PC-9 (cell line): ENCODE measurements at regions of chr19 and their contacts with region 1.

Region 1: GRCh38 chr19:51986309-51987291 is at the start of gene ZNF350:
- DNase-seq: peak; percentile 88 to 91
- H3K4me3 ChIP-seq: peak within 1 kb of the TSS; percentile 70
- H3K27ac ChIP-seq: peak within 1 kb of the TSS; percentile 22
- H3K4me1 ChIP-seq: peaks cover 9% of the 10 kb centered on the region; the same call in 1 of the 2 replicates
- H3K27me3 ChIP-seq: no peaks in the 10 kb centered on the region
- CTCF ChIP-seq: no peak
- total RNA-seq, gene ZNF350: 12.0 and 12.4 TPM in 2 replicates

Region 2: DNA sequence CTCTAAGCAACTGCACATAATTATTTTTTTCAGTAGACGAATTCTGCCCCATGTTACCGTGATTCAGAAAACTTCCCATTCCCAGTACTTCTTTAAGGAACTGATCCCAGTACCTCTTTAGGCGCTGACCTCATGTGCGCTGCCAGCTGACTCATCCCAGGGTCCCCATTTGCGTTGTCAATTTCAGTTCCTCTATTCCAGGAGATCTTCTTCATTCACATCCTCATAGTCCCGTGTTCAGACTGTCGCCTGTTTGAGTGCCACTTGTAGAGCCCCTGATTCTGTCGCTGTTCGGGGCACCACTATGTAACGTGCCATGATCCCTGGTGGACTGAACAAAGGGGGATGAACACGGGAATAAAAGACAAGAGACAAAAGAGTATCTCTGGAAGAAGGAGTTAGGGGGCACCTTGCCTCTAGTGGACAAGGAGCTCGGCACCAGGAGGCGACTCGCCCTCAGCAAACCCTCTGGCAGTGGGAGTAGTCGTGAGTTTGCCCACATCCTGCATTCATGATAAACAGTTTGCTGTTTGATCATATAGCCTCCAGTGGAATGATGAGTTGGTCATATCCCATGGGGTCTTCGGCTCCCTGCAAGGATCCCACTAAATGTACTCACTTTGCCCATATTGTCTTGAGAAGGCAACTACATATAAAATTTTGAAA is 175.1 kb before region 1 on chr19:
- CTCF ChIA-PET with region 1: no interaction called
- POLR2A ChIA-PET with region 1: no interaction called
- intact Hi-C with region 1: no loop called
- DNase-seq: no peak
- H3K4me3 ChIP-seq: no peak overlapping the region
- H3K27ac ChIP-seq: no peak overlapping the region
- H3K4me1 ChIP-seq: no peaks in the 10 kb centered on the region
- H3K27me3 ChIP-seq: peaks cover 19% of the 10 kb centered on the region
- CTCF ChIP-seq: no peak

Region 3: DNA sequence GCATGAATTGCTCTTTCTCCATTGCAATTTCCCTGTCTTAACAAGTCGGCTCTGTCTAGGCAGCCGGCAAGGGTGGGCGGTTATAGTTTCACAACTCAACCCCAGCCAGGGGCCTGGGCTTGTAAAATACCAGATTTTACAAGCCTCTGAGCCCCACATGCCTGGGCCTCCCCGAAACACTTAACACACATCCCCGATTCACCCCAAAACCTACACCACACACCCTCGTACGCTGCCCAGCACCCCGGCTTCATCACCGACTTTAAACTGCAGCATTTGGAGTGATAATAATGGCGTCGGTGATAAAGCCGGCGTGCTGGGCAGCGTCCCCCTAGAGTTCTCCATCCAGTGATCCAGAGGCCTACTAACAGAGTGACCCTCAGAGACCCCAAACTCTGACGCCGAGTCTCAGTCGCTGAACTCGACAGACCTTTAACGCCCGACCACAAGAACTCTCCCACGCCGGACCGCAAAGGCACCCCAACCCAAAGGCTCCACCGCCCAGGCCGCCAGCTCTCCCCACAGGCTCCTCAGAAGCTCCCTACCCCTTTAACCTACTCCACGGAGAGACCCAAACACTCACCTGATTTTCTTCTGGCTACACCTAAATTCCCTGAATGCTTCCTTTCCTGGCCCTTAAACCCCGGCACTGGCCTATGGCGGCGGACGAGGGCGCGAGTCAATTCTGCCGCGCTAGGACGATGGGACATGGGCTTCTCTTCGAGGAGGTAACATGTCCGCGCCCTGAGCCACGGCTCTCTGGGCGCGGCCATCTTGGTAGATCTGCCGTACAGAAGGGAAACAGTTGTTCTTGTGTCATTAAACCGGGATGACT is 82.1 kb before region 1 on chr19 and contains the start of gene ZNF649:
- CTCF ChIA-PET with region 1: no interaction called
- POLR2A ChIA-PET with region 1: no interaction called
- intact Hi-C with region 1: loop called (anchors 1 kb)
- DNase-seq: peak; percentile 82 to 85
- H3K4me3 ChIP-seq: peak within 1 kb of the TSS; percentile 81
- H3K27ac ChIP-seq: no peak within 1 kb of the TSS
- H3K4me1 ChIP-seq: peaks cover 7% of the 10 kb centered on the region; the same call in 1 of the 2 replicates
- H3K27me3 ChIP-seq: no peaks in the 10 kb centered on the region
- CTCF ChIP-seq: no peak
- total RNA-seq, gene ZNF649: 8.8 and 9.6 TPM in 2 replicates

Region 4: GRCh38 chr19:51926784-51927742 is 59.5 kb before region 1 on chr19 and contains the start of gene ZNF613:
- CTCF ChIA-PET with region 1: no interaction called
- POLR2A ChIA-PET with region 1: no interaction called
- intact Hi-C with region 1: loop called (anchors 1 kb)
- DNase-seq: peak; percentile 89 to 91
- H3K4me3 ChIP-seq: peak within 1 kb of the TSS; percentile 70
- H3K27ac ChIP-seq: peak within 1 kb of the TSS; percentile 69
- H3K4me1 ChIP-seq: peaks cover 5% of the 10 kb centered on the region
- H3K27me3 ChIP-seq: no peaks in the 10 kb centered on the region
- CTCF ChIP-seq: peak; percentile 55; the same call in 1 of the 2 replicates
- total RNA-seq, gene ZNF613: 4.8 and 5.6 TPM in 2 replicates

Region 5: DNA sequence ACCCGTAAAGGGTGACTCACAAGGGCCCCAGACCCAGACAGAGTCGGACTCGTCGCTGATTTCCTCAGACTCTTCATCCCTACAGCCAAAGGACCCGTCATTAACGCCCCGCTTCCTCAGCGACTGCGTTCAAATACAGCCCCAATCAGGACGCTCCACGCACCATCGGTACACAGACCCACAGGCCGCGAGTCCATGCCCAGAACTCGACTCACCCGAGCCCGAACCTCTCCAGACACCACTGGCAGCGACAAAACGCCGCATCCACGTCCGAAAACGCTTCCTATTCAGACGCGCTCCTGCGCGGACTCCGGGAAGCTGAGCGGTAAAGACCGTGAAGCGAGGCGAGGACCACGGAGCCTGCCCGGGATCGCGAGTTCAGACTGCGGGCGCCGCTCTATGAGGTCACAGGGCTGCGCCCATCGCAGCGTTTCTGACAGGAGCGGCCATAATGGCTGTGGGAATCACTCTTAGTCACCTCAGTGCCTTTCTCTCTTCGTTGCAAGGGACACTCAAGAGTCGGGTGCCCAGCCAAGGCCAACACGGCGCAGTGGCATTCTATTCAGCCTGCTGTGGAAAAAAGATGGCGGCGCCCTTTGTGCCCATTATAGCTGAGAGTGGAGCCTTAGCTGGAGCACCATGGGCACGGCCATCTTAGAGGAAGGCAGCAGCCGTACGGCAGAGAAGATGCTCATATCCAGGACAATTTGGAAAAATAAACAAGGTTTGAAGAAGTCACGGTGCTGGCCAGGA is 41.6 kb after region 1 on chr19 and contains the start of gene ZNF614:
- CTCF ChIA-PET with region 1: no interaction called
- POLR2A ChIA-PET with region 1: no interaction called
- intact Hi-C with region 1: loop called (anchors 1 kb)
- DNase-seq: peak; percentile 75 to 85
- H3K4me3 ChIP-seq: peak within 1 kb of the TSS; percentile 79
- H3K27ac ChIP-seq: peak within 1 kb of the TSS; percentile 69
- H3K4me1 ChIP-seq: peaks cover 7% of the 10 kb centered on the region; the same call in 1 of the 2 replicates
- H3K27me3 ChIP-seq: no peaks in the 10 kb centered on the region
- CTCF ChIP-seq: no peak
- total RNA-seq, gene ZNF614: 8.6 and 9.9 TPM in 2 replicates

Region 6: DNA sequence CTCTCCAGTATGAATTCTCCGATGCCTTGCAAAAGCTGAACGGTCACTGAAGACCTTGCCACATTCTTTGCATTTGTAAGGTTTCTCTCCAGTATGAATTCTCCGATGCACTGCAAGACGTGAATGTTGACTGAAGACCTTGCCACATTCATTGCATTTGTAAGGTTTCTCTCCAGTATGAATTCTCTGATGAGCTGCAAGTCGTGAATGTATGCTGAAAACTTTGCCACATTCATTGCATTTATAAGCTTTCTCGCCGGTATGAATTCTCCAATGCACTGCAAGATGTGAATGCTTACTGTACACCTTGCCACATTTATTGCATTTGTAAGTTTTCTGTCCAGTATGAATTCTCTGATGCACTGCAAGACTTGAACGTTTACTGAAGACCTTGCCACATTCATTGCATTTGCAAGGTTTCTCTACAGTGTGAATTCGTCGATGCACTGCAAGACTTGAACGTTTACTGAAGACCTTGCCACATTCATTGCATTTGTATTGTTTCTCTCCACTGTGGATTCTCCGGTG is 129.0 kb after region 1 on chr19:
- CTCF ChIA-PET with region 1: no interaction called
- POLR2A ChIA-PET with region 1: no interaction called
- intact Hi-C with region 1: no loop called
- DNase-seq: no peak
- H3K4me3 ChIP-seq: no peak overlapping the region
- H3K27ac ChIP-seq: no peak overlapping the region
- H3K4me1 ChIP-seq: no peaks in the 10 kb centered on the region
- H3K27me3 ChIP-seq: no peaks in the 10 kb centered on the region
- CTCF ChIP-seq: no peak

Region 7: GRCh38 chr19:52734893-52735661 is 748.5 kb after region 1 on chr19 and contains the start of gene ZNF611:
- CTCF ChIA-PET with region 1: no interaction called
- POLR2A ChIA-PET with region 1: no interaction called
- intact Hi-C with region 1: loop called (anchors 10 kb)
- DNase-seq: peak; percentile 85 to 99
- H3K4me3 ChIP-seq: peak within 1 kb of the TSS; percentile 79
- H3K27ac ChIP-seq: peak within 1 kb of the TSS; percentile 55
- H3K4me1 ChIP-seq: no peaks in the 10 kb centered on the region; the same call in 1 of the 2 replicates
- H3K27me3 ChIP-seq: no peaks in the 10 kb centered on the region
- CTCF ChIP-seq: peak; percentile 74
- total RNA-seq, gene ZNF611: 25.5 and 26.2 TPM in 2 replicates